Activated CD8-positive, alpha-beta T cell treated with anti-CD3 and anti-CD28 coated beads, Interleukin-2, amount 10 ng/mL, durations not matched to agents 7 days and 5 days (primary cell): ENCODE measurements at regions of chr12 and their contacts with region 1.

Region 1: GRCh38 chr12:119444456-119445044 is 110.0 kb downstream of the CCDC60 start:
- DNase-seq: peak; percentile 64
- ATAC-seq: no peak
- H3K4me3 Mint-ChIP-seq: no peak overlapping the region
- H3K27ac Mint-ChIP-seq: no peak overlapping the region
- H3K4me1 Mint-ChIP-seq: peaks cover 4% of the 10 kb centered on the region
- H3K27me3 Mint-ChIP-seq: peaks cover 5% of the 10 kb centered on the region

Region 2: DNA sequence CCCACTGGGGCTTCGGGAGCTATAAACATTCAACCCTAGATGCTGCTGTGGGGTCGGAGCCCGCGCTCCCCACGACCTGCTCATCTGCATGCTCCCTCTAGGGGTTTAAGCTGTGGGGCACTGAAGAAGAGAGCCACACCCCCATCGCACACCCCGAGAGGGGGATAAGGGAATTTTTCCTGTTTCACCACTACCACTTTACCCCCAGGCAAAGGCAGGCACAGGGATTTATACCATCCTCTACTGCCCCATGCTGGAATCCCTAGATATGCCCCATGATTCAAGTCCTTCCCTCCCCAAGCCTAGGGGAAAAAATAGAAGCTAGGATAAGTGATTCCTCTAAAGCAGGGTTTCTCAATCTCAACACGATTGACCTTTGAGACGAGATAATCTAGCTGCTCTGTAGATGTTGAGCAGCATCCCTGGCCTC is 169.9 kb before region 1 on chr12:
- CTCF ChIA-PET with region 1: no interaction called
- POLR2A ChIA-PET with region 1: no interaction called
- DNase-seq: no peak
- ATAC-seq: no peak
- H3K4me3 Mint-ChIP-seq: no peak overlapping the region
- H3K27ac Mint-ChIP-seq: no peak overlapping the region
- H3K4me1 Mint-ChIP-seq: no peaks in the 10 kb centered on the region
- H3K27me3 Mint-ChIP-seq: no peaks in the 10 kb centered on the region

Region 3: DNA sequence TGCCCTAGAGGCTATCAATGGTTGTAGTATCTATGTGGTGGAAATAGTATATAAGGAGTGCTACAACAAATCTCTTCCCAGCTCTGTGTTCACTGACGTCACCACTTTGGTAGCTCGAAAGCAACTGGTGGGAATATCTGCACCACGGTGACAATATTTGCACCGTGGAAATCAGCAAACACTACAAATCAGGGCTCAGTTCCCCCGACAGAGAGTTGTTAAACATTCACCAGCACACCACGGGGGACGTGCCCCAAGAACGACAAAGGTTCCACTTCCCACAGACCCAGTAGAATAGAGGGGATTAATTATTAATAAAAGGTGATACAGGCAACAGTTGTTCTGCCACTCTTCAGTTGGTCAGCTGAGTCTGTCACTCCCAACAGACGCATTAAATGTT is 11.6 kb before region 1 on chr12:
- CTCF ChIA-PET with region 1: interaction called, 12 read pairs
- POLR2A ChIA-PET with region 1: no interaction called
- DNase-seq: no peak
- ATAC-seq: no peak
- H3K4me3 Mint-ChIP-seq: no peak overlapping the region
- H3K27ac Mint-ChIP-seq: no peak overlapping the region
- H3K4me1 Mint-ChIP-seq: no peaks in the 10 kb centered on the region
- H3K27me3 Mint-ChIP-seq: no peaks in the 10 kb centered on the region

Region 4: DNA sequence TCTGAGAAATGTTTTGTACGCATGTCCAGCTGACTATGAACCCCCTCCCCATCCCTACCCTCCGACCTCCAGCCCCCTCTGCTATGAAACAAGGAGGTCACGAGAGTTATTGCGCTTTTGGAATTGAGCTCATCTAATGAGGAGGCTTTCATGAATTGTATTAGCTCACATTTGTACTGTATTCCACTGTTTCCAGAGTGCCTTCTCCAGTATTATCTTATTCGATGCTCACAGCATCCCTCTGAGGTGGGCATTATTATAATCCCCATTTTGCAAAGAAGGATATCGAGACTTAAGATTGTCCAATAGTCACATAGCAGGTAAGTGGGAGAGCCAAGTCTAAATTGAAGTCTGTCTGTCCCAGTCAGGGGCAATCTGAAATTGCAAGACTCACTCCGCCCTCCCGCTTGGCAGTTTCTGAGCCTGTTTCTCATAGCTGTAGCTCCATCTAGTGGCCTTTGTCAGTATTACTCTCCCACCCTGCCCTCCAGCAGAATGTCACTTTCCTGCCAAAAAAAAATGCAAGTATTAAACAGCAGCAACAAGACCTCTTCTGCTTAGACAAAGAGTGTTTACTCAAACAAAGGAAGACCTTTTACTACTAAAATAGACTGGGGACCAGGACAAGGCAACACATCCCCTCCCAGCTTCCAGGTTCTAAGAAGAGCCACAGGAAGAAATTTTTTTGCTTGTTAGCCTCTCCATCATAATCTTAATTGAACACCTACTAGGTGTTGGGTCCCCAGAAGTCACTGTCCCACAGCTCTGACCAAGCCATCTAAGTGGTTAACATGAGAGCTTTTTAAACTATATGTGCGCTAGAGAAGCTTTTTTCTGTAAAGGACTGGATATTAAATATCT is 100.4 kb after region 1 on chr12:
- CTCF ChIA-PET with region 1: interaction called, 62 read pairs
- POLR2A ChIA-PET with region 1: no interaction called
- DNase-seq: peak; percentile 70
- ATAC-seq: peak; percentile 69
- H3K4me3 Mint-ChIP-seq: no peak overlapping the region
- H3K27ac Mint-ChIP-seq: no peak overlapping the region
- H3K4me1 Mint-ChIP-seq: no peaks in the 10 kb centered on the region
- H3K27me3 Mint-ChIP-seq: no peaks in the 10 kb centered on the region

Region 5: GRCh38 chr12:119649202-119649808 is 204.8 kb after region 1 on chr12:
- CTCF ChIA-PET with region 1: interaction called, 14 read pairs
- POLR2A ChIA-PET with region 1: no interaction called
- DNase-seq: no peak
- ATAC-seq: no peak
- H3K4me3 Mint-ChIP-seq: no peak overlapping the region
- H3K27ac Mint-ChIP-seq: no peak overlapping the region
- H3K4me1 Mint-ChIP-seq: no peaks in the 10 kb centered on the region
- H3K27me3 Mint-ChIP-seq: peaks cover 2% of the 10 kb centered on the region